ENCODE measurements at regions of chr21 and their contacts with region 1.

Region 1: DNA sequence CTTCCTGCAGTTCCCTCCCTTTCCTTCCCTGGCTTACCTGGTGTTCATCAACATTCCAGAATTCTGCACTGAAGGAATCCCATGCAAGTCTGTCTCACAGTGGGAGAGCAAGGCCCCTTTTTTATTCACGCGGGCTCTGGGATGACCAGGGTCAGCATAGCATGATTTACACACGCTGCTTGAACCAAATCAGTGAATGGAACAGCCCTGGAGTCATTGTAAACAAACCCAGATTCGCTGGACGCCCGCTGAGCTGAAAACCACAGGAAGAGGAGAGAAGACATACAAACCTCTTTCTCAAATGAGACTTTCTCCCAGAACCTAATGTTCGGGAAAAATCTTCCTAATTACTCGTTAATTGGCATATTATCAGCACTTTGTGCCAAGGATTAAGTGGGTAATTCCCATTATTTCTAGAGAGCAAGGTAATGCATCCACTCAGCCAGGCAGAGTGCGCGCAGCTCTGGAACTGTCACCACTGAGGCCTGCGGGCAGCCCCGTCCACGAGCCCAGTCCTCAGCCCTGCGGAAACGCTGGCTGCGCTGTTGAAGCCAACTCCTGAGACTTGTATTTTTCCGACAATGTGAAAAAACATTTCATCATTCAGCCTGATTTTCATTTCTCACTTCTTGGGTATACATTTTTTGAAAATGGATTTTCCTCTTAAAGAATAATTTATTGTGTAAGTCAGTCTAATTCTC is 140.0 kb downstream of the ETS2 start:
- DNase-seq: no peak
- H3K4me3 ChIP-seq: no peak overlapping the region
- H3K4me3 Mint-ChIP-seq: no peak overlapping the region
- H3K27ac Mint-ChIP-seq: no peak overlapping the region
- H3K4me1 ChIP-seq: peaks cover 5% of the 10 kb centered on the region; the same call in 1 of the 2 replicates
- H3K4me1 Mint-ChIP-seq: no peaks in the 10 kb centered on the region
- H3K27me3 ChIP-seq: no peaks in the 10 kb centered on the region
- H3K27me3 Mint-ChIP-seq: no peaks in the 10 kb centered on the region
- CTCF ChIP-seq: no peak

Region 2: GRCh38 chr21:39016740-39017315 is 71.1 kb after region 1 on chr21:
- CTCF ChIA-PET with region 1: no interaction called
- POLR2A ChIA-PET with region 1: no interaction called
- intact Hi-C with region 1: no loop called
- DNase-seq: no peak
- H3K4me3 ChIP-seq: no peak overlapping the region
- H3K4me3 Mint-ChIP-seq: no peak overlapping the region
- H3K27ac Mint-ChIP-seq: no peak overlapping the region
- H3K4me1 ChIP-seq: peaks cover 12% of the 10 kb centered on the region
- H3K4me1 Mint-ChIP-seq: peaks cover 11% of the 10 kb centered on the region
- H3K27me3 ChIP-seq: no peaks in the 10 kb centered on the region
- H3K27me3 Mint-ChIP-seq: no peaks in the 10 kb centered on the region
- CTCF ChIP-seq: no peak

Region 3: GRCh38 chr21:39033878-39034602 is 88.3 kb after region 1 on chr21:
- CTCF ChIA-PET with region 1: no interaction called
- POLR2A ChIA-PET with region 1: no interaction called
- intact Hi-C with region 1: loop called (anchors 1 kb)
- DNase-seq: peak; percentile 69 to 84
- H3K4me3 ChIP-seq: no peak overlapping the region
- H3K4me3 Mint-ChIP-seq: peak overlapping the region; percentile 30
- H3K27ac Mint-ChIP-seq: peak overlapping the region; percentile 83
- H3K4me1 ChIP-seq: peaks cover 32% of the 10 kb centered on the region
- H3K4me1 Mint-ChIP-seq: peaks cover 34% of the 10 kb centered on the region
- H3K27me3 ChIP-seq: no peaks in the 10 kb centered on the region
- H3K27me3 Mint-ChIP-seq: no peaks in the 10 kb centered on the region
- CTCF ChIP-seq: no peak

Measured in Caco-2 (cell line).